ENCODE measurements at regions of chr18 and their contacts with region 1.

Region 1: DNA sequence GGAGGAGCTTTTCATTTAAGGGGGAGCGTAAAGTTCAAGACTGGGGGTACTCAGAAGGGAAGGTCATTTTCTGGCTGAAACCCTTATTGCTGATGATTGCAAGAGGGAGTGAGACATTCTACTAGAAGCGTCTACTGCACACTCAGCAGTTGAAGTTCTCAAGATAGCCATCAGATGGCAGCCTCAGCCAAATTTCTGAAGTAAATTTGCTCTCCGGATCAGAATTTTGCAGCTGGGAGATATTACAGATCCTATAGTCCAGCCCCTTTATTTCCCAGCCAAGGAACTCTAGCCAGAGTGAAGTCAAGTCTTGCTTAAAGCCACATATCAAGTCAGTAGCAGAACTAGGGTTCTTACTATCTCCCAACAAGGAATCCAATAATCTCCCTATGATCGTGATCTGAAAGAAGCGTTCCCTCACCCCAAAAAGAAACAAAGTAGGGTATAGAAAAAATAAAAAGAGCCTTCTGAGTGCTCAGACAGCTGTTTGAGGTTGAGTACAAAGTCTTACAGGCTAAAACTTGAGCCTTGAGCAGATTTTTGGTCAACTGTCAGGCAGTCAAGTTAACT is 24.0 kb downstream of the RAX start:
- DNase-seq: peak; percentile 90
- ATAC-seq: peak; percentile 98
- H3K4me3 ChIP-seq: no peak overlapping the region
- H3K27ac ChIP-seq: no peak overlapping the region
- H3K4me1 ChIP-seq: no peaks in the 10 kb centered on the region
- H3K27me3 ChIP-seq: peaks cover 48% of the 10 kb centered on the region
- CTCF ChIP-seq: peak; percentile 87

Region 2: DNA sequence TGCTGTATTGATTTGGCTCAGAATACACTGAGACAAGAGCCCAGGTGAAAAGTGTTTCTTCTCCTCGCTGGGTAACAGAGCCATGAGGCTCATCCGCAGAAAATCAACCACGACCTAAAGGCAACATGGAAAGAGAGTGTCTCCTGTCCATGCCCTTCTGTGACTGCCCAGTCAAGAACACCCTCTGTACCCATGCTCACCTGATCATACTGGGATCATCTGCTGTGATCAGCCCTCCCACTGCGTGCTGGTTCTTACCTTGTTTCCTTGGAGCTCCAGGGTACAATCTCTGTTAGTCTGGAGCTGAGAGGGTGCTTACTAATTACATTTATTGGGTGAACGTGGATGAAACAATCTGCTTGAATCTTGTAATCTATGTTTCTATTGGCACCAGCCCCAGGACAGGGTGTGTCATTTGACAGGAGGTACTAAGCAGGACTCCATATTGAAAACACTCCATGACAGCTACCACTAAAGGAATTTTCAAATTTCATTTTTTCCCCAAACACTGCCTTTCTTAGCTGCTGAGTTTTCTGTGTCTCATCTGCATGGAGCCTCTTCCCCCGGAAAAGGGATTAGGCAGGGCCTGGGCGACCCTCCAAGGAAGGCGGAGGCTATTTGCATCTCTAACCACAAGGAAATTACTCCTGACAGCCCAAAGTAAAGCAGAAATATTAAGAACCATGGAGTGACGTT is 69.0 kb before region 1 on chr18:
- CTCF ChIA-PET with region 1: no interaction called
- POLR2A ChIA-PET with region 1: no interaction called
- intact Hi-C with region 1: no loop called
- DNase-seq: no peak
- ATAC-seq: no peak
- H3K4me3 ChIP-seq: no peak overlapping the region
- H3K27ac ChIP-seq: no peak overlapping the region
- H3K4me1 ChIP-seq: no peaks in the 10 kb centered on the region
- H3K27me3 ChIP-seq: peaks cover 22% of the 10 kb centered on the region
- CTCF ChIP-seq: no peak

Region 3: GRCh38 chr18:59303006-59303405 is 53.7 kb after region 1 on chr18:
- CTCF ChIA-PET with region 1: interaction called, 22 read pairs
- POLR2A ChIA-PET with region 1: interaction called, 22 read pairs
- intact Hi-C with region 1: loop called (anchors 1 kb)
- DNase-seq: no peak
- ATAC-seq: no peak
- H3K4me3 ChIP-seq: no peak overlapping the region
- H3K27ac ChIP-seq: no peak overlapping the region
- H3K4me1 ChIP-seq: peaks cover 36% of the 10 kb centered on the region
- H3K27me3 ChIP-seq: no peaks in the 10 kb centered on the region
- CTCF ChIP-seq: no peak

Region 4: DNA sequence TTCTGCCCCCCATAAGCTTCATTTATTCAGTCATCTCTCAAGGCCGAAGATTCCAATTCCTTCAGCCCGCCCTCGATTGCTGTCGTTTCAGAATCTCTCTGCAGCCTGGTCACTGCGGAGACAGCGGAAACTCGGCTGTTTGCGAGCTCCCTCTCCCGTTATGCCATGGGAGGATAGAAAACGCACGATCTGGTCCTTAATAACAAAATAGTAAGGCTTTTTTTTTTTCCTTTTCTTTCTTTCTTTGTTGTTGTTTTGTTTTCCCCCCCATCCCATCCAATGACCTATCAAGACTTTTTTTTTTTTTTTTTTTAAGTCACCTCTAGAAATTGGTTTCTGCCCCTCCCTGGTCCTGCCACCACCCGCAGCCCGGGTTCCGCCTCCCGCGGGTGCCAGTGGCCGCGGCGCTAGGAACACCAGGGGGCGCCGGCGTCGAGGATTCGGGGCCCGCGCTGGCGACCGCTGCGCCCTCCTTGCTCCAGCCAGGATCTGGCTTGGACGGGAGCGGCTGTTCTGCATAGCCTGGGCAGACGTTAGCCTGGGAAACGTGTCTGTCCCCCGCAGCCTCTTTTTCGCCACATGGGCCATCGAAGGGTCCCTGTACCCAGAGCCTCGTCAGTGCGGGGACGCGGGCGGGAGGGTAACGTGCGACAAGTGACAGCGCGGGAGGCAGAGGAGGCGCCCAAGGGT is 59.1 kb after region 1 on chr18:
- CTCF ChIA-PET with region 1: interaction called, 22 read pairs
- POLR2A ChIA-PET with region 1: interaction called, 4 read pairs
- intact Hi-C with region 1: loop called (anchors 1 kb)
- DNase-seq: peak; percentile 81
- ATAC-seq: peak; percentile 97
- H3K4me3 ChIP-seq: peak overlapping the region; percentile 65
- H3K27ac ChIP-seq: no peak overlapping the region
- H3K4me1 ChIP-seq: no peaks in the 10 kb centered on the region
- H3K27me3 ChIP-seq: no peaks in the 10 kb centered on the region
- CTCF ChIP-seq: peak; percentile 87